Heart right ventricle (tissue), 16 donors: ENCODE measurements at regions of chr12 and their contacts with region 1.

Region 1: DNA sequence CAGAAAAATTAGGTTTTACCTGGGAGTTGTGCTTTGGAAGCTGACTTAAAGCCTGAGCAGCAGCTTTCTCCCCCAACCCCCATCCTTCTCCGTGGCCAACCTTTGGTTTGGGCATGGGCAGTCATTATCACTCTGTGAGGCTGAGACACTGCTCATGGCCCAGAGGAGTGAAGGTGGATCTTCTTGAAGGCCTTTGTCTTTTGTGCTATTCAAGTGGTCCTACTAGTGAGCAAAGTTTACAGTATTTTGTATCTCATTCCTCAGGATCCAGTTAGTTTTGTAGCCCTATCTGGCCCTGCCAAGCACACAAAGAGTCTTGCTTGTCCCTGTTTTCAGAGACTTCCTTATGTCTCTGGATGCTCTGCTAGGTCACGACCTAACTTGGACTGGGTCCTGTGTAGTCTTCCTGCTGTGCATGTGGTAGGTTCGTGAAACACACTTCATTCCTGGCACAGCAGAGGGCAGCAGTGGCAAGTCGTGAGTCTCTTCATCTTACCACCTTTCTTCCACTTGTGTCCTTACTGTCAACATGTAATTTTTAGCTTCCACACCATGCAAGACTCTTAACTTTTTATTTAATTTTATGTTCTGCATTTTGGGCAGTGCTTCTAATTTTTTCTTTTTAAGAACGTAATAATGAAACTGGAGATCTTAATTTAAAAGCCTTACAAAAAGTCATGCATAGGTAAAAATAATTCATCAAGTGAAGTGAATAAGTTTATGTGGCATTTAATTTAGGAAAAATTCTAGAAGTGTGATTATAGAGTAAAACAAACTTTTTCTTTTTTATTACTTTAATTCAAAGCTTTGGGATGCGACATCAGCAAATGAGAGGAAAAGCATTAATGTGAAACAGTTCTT is 53.7 kb downstream of the APAF1 start:
- DNase-seq: peak; percentile 34 to 44
- ATAC-seq: peak; percentile 66 to 97 (median 84)
- H3K4me3 ChIP-seq: no peak overlapping the region
- H3K27ac ChIP-seq: peak overlapping the region in 2 of 10 donors; percentile 18 to 46
- H3K4me1 ChIP-seq: peaks cover 0 to 19% (median 13%) of the 10 kb centered on the region in 9 donors
- H3K27me3 ChIP-seq: no peaks in the 10 kb centered on the region
- CTCF ChIP-seq: peak in 8 of 9 donors; percentile 25 to 71 (median 50)

Region 2: DNA sequence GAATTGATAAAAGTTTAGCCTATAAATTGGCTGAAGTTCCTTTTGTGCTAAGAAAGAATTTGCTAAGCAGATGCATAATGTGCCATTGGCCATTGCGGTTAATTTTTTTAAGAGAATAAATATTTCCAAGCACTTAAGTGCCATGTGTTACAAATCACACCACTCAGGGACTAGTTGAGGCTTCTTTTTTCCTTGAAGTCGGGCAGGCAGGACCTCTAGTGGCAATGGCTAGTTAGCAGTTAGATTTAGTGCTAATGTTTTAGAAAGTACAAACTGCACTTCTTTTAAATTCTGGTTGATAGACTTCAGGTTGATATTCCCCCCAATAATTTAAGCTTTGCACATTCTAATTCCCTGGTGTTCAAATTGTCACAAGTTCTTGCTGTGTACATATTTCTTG is 240.5 kb after region 1 on chr12:
- intact Hi-C with region 1: loop called in 1 of 10 experiments (anchors 10 kb)
- DNase-seq: no peak
- ATAC-seq: no peak
- H3K4me3 ChIP-seq: no peak overlapping the region
- H3K27ac ChIP-seq: no peak overlapping the region
- H3K4me1 ChIP-seq: no peaks in the 10 kb centered on the region
- H3K27me3 ChIP-seq: peaks cover 0 to 9% (median 0%) of the 10 kb centered on the region in 7 donors
- CTCF ChIP-seq: peak in 7 of 9 donors; percentile 15 to 47 (median 28)

Region 3: GRCh38 chr12:98998697-98999299 is 300.0 kb after region 1 on chr12:
- intact Hi-C with region 1: loop called in 8 of 10 experiments (anchors 1 to 10 kb)
- DNase-seq: no peak
- ATAC-seq: peak in 7 of 8 donors; percentile 58 to 80 (median 75)
- H3K4me3 ChIP-seq: no peak overlapping the region
- H3K27ac ChIP-seq: no peak overlapping the region
- H3K4me1 ChIP-seq: peaks cover 0 to 3% (median 0%) of the 10 kb centered on the region in 9 donors
- H3K27me3 ChIP-seq: no peaks in the 10 kb centered on the region
- CTCF ChIP-seq: peak; percentile 33 to 75 (median 67)

Region 4: DNA sequence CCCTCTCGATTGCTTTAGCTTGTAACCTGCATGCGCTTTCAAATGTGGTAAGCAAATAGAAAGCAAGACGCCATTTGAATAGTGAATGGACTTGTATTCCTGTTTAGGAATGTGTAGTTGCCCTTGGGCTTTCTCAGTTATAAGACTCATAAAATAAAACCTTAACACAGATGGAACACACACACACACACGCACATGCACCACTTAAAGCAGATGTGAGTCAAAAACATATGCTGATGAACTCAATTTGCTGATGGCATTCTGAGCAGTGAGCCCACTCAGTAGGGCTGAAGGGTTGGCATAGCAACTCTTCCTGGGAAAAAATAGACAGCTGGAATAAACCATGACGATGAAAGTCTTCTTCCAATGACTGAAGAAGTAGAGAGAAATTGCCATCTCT is 306.8 kb after region 1 on chr12:
- intact Hi-C with region 1: loop called in 1 of 10 experiments (anchors 10 kb)
- DNase-seq: no peak
- ATAC-seq: no peak
- H3K4me3 ChIP-seq: no peak overlapping the region
- H3K27ac ChIP-seq: no peak overlapping the region
- H3K4me1 ChIP-seq: no peaks in the 10 kb centered on the region
- H3K27me3 ChIP-seq: peaks cover 0 to 4% (median 0%) of the 10 kb centered on the region in 7 donors
- CTCF ChIP-seq: no peak